CD8-positive, alpha-beta T cell (primary cell): ENCODE measurements at regions of chr18 and their contacts with region 1.

Region 1: DNA sequence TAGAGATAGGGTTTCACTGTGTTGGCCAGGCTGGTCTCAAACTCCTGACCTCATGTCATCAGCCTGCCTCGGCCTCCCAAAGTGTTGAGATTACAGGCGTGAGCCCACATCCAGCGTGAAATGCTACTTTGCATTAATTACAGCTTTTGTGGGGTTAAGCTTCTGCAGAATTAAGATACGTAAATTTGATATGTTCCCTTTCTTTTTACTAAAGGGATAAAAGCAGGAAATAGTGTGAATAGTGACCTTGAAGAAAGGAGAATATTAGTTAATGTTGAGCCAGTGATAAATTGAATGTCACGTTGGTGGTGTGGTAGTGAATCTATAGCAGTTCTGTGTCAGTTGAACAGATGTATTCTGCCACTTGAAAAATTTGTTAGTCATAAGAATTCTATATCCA is 16.9 kb downstream of the SMCHD1 start:
- DNase-seq: no peak
- ATAC-seq: no peak
- H3K4me3 ChIP-seq: no peak overlapping the region
- H3K4me3 Mint-ChIP-seq: no peak overlapping the region
- H3K27ac ChIP-seq: no peak overlapping the region
- H3K27ac Mint-ChIP-seq: no peak overlapping the region
- H3K4me1 ChIP-seq: peaks cover 6% of the 10 kb centered on the region
- H3K4me1 Mint-ChIP-seq: peaks cover 69% of the 10 kb centered on the region
- H3K27me3 ChIP-seq: no peaks in the 10 kb centered on the region
- H3K27me3 Mint-ChIP-seq: no peaks in the 10 kb centered on the region
- CTCF ChIP-seq: no peak

Region 2: GRCh38 chr18:2636126-2636631 is 36.2 kb before region 1 on chr18:
- CTCF ChIA-PET with region 1: interaction called, 5 read pairs
- POLR2A ChIA-PET with region 1: interaction called, 4 read pairs
- intact Hi-C with region 1: loop called in 1 of 2 experiments (anchors 5 kb)
- DNase-seq: peak in 2 of 9 experiments; percentile 22 to 65
- ATAC-seq: peak; percentile 43
- H3K4me3 ChIP-seq: peak overlapping the region; percentile 41 to 44
- H3K4me3 Mint-ChIP-seq: peak overlapping the region; percentile 83
- H3K27ac ChIP-seq: peak overlapping the region; percentile 92 to 95
- H3K27ac Mint-ChIP-seq: peak overlapping the region; percentile 100
- H3K4me1 ChIP-seq: peaks cover 64% of the 10 kb centered on the region
- H3K4me1 Mint-ChIP-seq: peaks cover 88% of the 10 kb centered on the region
- H3K27me3 ChIP-seq: no peaks in the 10 kb centered on the region
- H3K27me3 Mint-ChIP-seq: no peaks in the 10 kb centered on the region
- CTCF ChIP-seq: no peak

Region 3: DNA sequence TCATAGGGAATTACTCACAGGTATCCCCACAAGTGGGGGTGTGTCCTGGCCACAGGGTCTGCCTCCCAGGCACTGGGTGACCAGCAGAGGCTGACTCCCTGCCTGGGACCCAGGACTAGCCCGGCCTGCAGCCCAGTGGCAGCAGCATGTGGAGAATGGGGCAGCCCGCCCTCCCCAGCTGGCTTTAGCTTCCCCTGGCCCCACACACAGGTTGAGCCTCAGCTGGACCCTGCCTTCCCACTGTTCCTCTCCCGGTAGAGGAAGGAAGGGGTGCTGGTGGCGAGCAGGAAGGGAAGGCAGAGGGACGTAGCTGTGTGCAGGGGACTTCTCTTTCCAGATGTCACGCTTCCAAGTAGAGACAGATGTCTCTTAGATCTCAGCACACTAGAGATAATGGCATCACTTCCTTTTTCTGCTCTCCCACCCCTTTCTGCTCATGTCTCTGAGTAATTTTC is 225.8 kb after region 1 on chr18:
- CTCF ChIA-PET with region 1: no interaction called
- POLR2A ChIA-PET with region 1: no interaction called
- intact Hi-C with region 1: no loop called
- DNase-seq: no peak
- ATAC-seq: no peak
- H3K4me3 ChIP-seq: no peak overlapping the region
- H3K4me3 Mint-ChIP-seq: no peak overlapping the region
- H3K27ac ChIP-seq: no peak overlapping the region
- H3K27ac Mint-ChIP-seq: no peak overlapping the region
- H3K4me1 ChIP-seq: peaks cover under 1% of the 10 kb centered on the region
- H3K4me1 Mint-ChIP-seq: peaks cover 3% of the 10 kb centered on the region
- H3K27me3 ChIP-seq: no peaks in the 10 kb centered on the region
- H3K27me3 Mint-ChIP-seq: no peaks in the 10 kb centered on the region
- CTCF ChIP-seq: no peak